Activated CD4-positive, alpha-beta memory T cell treated with anti-CD3 and anti-CD28 coated beads, Interleukin-2, amount 10 ng/mL, durations not matched to agents 7 days and 5 days (primary cell): ENCODE measurements at regions of chr1 and their contacts with region 1.

Region 1: DNA sequence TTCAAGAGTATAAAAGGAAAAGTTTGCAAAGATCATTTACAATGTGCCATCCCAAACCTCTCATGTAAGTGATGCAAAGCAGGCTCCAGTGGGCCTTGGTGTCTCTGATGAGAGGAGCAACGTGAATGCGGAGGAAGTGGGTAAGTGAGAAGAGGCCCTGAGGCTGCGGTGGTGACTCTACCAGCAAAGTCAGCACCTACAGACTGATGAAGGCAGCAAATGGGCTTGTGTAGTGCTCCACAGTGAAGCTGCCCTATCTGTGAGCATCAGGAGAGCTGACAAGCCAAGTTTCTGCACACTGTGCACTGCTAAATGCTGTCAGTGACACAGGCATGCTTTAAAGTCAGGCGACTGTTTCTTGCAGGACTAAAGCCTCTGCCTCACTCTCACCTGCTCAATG is 15.6 kb upstream of the RAP1A start:
- DNase-seq: peak; percentile 92
- H3K4me3 Mint-ChIP-seq: peak overlapping the region; percentile 76
- H3K27ac Mint-ChIP-seq: peak overlapping the region; percentile 98
- H3K4me1 Mint-ChIP-seq: peaks cover 75% of the 10 kb centered on the region
- H3K27me3 Mint-ChIP-seq: no peaks in the 10 kb centered on the region

Region 2: DNA sequence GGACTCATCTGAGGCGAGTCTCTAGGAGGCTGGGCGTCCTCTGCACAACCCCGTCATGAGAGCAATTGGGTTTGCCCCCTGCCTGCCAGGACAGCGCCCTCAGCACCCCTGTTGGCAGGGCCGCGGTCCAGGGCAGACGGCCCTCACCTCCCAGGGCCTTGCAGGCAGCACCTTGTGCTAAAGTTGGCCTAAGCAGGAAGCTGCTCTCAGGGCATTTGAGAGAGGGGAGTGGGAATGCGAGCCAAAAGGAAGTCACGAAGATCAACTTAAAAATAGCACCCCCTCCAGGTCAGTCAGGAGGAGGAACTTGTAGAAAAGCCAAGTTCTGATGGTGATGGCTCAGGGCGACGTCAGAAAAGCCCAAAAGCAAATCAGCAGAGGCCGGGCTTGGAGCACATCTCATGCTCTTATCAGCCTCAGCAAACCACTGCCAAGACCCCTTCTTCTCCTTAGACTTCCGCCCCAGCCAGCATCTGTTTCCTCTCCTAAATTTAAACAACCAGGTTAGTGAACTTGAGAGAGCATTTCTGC is 87.9 kb before region 1 on chr1:
- CTCF ChIA-PET with region 1: interaction called, 9 read pairs
- POLR2A ChIA-PET with region 1: interaction called, 10 read pairs
- DNase-seq: no peak
- H3K4me3 Mint-ChIP-seq: no peak overlapping the region
- H3K27ac Mint-ChIP-seq: no peak overlapping the region
- H3K4me1 Mint-ChIP-seq: peaks cover 31% of the 10 kb centered on the region
- H3K27me3 Mint-ChIP-seq: no peaks in the 10 kb centered on the region

Region 3: GRCh38 chr1:111619635-111620440 is 15.9 kb after region 1 on chr1 and contains the start of gene RAP1A:
- CTCF ChIA-PET with region 1: interaction called, 40 read pairs
- POLR2A ChIA-PET with region 1: interaction called, 641 read pairs
- DNase-seq: peak; percentile 95
- H3K4me3 Mint-ChIP-seq: peak within 1 kb of the TSS; percentile 93
- H3K27ac Mint-ChIP-seq: peak within 1 kb of the TSS; percentile 86
- H3K4me1 Mint-ChIP-seq: peaks cover 70% of the 10 kb centered on the region
- H3K27me3 Mint-ChIP-seq: no peaks in the 10 kb centered on the region
- total RNA-seq, gene RAP1A: 219 to 221 TPM

Region 4: GRCh38 chr1:111628153-111628552 is 24.2 kb after region 1 on chr1:
- CTCF ChIA-PET with region 1: interaction called, 40 read pairs
- POLR2A ChIA-PET with region 1: interaction called, 641 read pairs
- DNase-seq: no peak
- H3K4me3 Mint-ChIP-seq: peak overlapping the region; percentile 42
- H3K27ac Mint-ChIP-seq: peak overlapping the region; percentile 70
- H3K4me1 Mint-ChIP-seq: peaks cover 82% of the 10 kb centered on the region
- H3K27me3 Mint-ChIP-seq: no peaks in the 10 kb centered on the region

Region 5: GRCh38 chr1:111648806-111649205 is 44.8 kb after region 1 on chr1:
- CTCF ChIA-PET with region 1: no interaction called
- POLR2A ChIA-PET with region 1: interaction called, 10 read pairs
- DNase-seq: no peak
- H3K4me3 Mint-ChIP-seq: no peak overlapping the region
- H3K27ac Mint-ChIP-seq: no peak overlapping the region
- H3K4me1 Mint-ChIP-seq: peaks cover 71% of the 10 kb centered on the region
- H3K27me3 Mint-ChIP-seq: no peaks in the 10 kb centered on the region

Region 6: GRCh38 chr1:111679541-111679940 is 75.6 kb after region 1 on chr1:
- CTCF ChIA-PET with region 1: no interaction called
- POLR2A ChIA-PET with region 1: no interaction called
- DNase-seq: no peak
- H3K4me3 Mint-ChIP-seq: no peak overlapping the region
- H3K27ac Mint-ChIP-seq: no peak overlapping the region
- H3K4me1 Mint-ChIP-seq: peaks cover 26% of the 10 kb centered on the region
- H3K27me3 Mint-ChIP-seq: no peaks in the 10 kb centered on the region